Adrenal gland (tissue), 19 donors: ENCODE measurements at regions of chr17 and their contacts with region 1.

Region 1: GRCh38 chr17:42067351-42068091 is 17.1 kb upstream of the C17orf113 start:
- DNase-seq: peak; percentile 51 to 84 (median 68)
- H3K4me3 ChIP-seq: no peak overlapping the region
- H3K27ac ChIP-seq: no peak overlapping the region
- H3K4me1 ChIP-seq: peaks cover 1 to 5% of the 10 kb centered on the region in 2 donors
- H3K27me3 ChIP-seq: peaks cover 12% of the 10 kb centered on the region
- CTCF ChIP-seq: peak; percentile 64 to 92 (median 85)
- POLR2A ChIP-seq: no peak

Region 2: GRCh38 chr17:42101513-42102319 is 34.2 kb after region 1 on chr17:
- intact Hi-C with region 1: loop called in 1 of 2 experiments (anchors 5 kb)
- DNase-seq: peak; percentile 80 to 91 (median 85)
- H3K4me3 ChIP-seq: no peak overlapping the region
- H3K27ac ChIP-seq: no peak overlapping the region
- H3K4me1 ChIP-seq: peaks cover 0 to 4% of the 10 kb centered on the region in 2 donors
- H3K27me3 ChIP-seq: peaks cover 7% of the 10 kb centered on the region
- CTCF ChIP-seq: peak; percentile 72 to 87 (median 82)
- POLR2A ChIP-seq: no peak

Region 3: DNA sequence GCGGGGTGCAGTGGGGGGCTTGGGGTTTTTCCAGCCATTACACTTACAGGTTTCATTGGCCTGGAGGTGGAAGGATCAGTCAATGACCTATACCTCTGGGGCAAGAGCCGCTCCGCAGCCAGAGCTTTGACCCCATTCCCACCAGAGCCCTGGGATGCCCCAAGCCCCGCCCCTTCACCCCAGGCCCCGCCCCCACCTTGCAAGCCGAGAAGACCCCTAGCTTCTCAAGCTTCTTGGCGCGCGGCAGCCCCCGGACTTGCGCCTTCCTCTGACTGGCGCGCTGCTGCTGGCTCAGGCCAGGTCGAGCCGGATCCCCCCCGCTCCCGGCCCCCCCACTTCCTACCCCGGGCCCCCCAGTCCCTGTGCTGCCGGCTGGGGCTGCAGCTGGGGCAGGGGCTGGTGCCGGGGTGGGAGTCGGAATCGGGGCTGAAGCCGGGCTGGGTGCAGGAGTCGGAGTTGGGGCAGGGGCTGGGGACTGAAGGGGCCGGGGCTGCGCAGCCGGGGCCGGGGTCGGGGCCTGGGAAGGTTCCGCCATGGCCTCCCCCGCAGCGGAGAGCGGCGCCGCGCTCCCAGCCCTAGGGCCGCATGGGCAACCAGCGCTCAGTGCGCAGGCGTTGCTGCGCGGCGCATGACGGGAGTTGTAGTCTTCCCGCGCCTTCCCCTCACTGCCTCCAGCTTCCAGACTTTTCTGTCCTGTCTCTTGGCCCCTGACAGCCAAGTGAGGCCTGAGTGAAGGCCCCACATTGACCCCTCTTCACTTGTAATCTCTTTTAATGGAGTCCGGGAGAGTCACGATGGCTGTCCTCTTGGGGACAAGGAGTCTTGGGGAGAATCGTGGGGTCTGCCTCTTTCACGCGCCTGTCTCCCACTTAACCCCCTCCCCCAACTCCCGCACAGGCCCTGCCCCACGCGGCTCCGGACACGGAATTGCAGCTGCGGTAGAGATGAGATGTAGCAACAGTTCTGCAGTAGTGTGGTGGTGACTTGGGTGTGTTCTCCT is 53.5 kb after region 1 on chr17 and contains the start of gene KAT2A:
- intact Hi-C with region 1: no loop called
- DNase-seq: peak; percentile 74 to 89 (median 80)
- H3K4me3 ChIP-seq: peak within 1 kb of the TSS; percentile 40 to 91 (median 68)
- H3K27ac ChIP-seq: peak within 1 kb of the TSS in 2 of 5 donors; percentile 30 to 49
- H3K4me1 ChIP-seq: peaks cover 14 to 21% of the 10 kb centered on the region in 2 donors
- H3K27me3 ChIP-seq: no peaks in the 10 kb centered on the region
- CTCF ChIP-seq: no peak
- POLR2A ChIP-seq: no peak
- total RNA-seq, gene KAT2A: 16.0 to 136 (median 53.2) TPM